Left cardiac atrium (tissue), 4 donors: ENCODE measurements at regions of chr15 and their contacts with region 1.

Region 1: DNA sequence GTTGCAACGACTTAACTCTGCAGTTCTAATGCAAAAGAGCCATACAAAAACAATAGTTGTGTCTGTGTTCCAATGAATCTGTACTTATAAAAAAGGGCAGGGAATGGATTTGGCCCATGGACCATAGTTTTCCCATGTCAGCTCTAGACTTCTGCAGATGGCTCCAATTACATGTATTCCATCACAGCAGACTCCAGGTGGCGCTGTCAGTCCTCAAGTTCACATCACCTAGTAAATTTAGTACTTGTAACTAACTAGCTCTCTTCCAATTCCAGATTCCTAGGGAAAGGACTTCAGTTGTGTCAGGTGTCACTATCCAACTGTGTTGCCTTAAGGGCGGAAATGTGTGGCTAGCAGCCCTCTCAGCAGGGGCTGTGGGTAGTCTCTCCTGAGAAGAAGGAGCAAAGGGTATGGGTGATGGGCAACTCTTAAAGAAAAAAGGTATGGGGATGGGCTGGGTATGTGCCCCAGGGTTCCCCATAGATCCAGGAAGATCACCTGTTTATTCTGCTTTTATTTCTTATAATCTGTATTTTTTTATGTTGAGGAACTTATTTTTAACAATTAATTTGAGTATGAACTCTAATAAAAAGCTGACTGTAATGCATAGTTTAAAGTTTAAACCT is 36.2 kb downstream of the BBS4 start:
- DNase-seq: peak; percentile 53
- ATAC-seq: peak in 1 of 2 donors; percentile 41

Region 2: GRCh38 chr15:73021139-73021621 is 299.0 kb after region 1 on chr15:
- intact Hi-C with region 1: no loop called
- DNase-seq: no peak
- ATAC-seq: no peak

Region 3: GRCh38 chr15:73081321-73081958 is 359.3 kb after region 1 on chr15:
- intact Hi-C with region 1: loop called in 1 of 2 experiments (anchors 10 kb)
- DNase-seq: no peak
- ATAC-seq: peak; percentile 53

Region 4: DNA sequence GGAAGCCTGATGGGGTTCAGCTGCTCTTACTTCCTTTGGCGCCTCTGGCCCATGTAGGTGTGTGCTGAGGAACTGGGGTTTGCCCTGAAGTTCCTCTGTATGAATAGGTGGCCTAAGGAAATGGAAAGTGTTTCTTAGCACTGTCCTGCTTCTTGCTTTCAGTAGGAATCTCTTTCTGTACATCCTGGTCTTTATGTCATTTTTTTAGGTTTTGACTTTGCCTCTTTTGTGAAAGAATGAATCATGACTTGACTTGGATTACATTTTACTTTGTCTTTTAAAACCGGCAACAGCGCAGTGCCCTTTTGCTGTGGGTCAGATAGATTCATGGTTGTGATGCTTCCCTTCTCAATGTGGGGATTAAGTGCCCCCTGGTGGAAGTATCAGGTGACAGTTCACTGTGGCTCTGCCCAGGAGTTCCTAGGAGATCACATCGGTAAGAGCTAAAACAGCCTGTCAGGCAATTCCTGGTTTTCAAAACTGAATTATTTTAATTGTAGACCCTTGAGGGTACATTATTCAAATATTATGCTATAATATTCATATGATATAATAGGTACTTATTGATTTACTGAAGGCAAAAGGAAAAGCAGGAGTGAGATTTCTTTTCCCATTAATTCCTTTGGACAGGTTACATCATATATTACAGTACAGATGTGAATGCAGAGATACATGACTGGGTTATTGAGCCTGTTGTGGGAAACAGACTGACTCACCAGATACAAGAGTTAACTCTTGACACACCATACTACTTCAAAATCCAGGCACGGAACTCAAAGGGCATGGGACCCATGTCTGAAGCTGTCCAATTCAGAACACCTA is 551.2 kb after region 1 on chr15:
- intact Hi-C with region 1: loop called in 1 of 2 experiments (anchors 10 kb)
- DNase-seq: peak; percentile 33
- ATAC-seq: peak; percentile 72 to 89